Lower lobe of right lung (tissue), 2 donors: ENCODE measurements at regions of chr9 and their contacts with region 1.

Region 1: GRCh38 chr9:7536310-7536939 is 263.2 kb downstream of the DMAC1 start:
- DNase-seq: peak; percentile 46
- ATAC-seq: peak; percentile 78 to 79
- H3K4me3 ChIP-seq: no peak overlapping the region
- H3K27ac ChIP-seq: no peak overlapping the region
- H3K4me1 ChIP-seq: no peaks in the 10 kb centered on the region
- H3K27me3 ChIP-seq: no peaks in the 10 kb centered on the region
- CTCF ChIP-seq: peak; percentile 69

Region 2: GRCh38 chr9:7055201-7055903 is 481.1 kb before region 1 on chr9:
- intact Hi-C with region 1: loop called (anchors 10 kb)
- DNase-seq: no peak
- ATAC-seq: no peak
- H3K4me3 ChIP-seq: no peak overlapping the region
- H3K27ac ChIP-seq: no peak overlapping the region
- H3K4me1 ChIP-seq: no peaks in the 10 kb centered on the region
- H3K27me3 ChIP-seq: no peaks in the 10 kb centered on the region
- CTCF ChIP-seq: no peak